CD8-positive, alpha-beta T cell (primary cell): ENCODE measurements at regions of chr11 and their contacts with region 1.

Region 1: DNA sequence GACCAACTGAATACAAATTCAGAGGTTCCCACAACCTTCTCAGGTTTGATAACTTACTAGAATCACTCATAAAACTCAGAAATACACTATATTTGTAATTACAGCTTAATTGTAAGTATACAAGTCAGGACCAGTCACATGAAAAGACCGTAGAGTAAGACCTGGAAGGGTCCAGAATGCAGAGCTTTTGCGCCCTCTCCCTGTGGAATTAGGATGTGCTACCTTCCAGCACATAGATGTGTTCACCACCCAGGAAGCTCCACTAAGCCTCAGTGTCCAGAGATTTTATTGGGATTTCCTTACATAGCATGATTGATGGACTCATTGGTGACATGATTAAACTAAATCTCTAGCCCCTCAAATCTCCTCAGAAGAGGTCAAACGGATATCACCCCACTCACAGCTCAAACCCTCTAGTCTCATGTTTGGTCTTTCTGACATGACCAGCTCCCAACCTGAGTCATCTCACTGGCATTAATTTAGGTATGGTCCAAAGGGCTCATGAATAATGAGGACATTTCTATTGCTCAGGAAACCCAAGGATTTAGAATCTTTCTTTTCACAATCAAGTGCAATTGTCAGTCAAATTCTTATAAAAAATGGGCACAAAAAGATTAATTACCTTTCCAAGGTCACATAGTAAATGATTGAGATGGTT is 77.2 kb upstream of the UBASH3B start:
- DNase-seq: no peak
- ATAC-seq: no peak
- H3K4me3 ChIP-seq: no peak overlapping the region
- H3K4me3 Mint-ChIP-seq: no peak overlapping the region
- H3K27ac ChIP-seq: no peak overlapping the region
- H3K27ac Mint-ChIP-seq: no peak overlapping the region
- H3K4me1 ChIP-seq: peaks cover 4% of the 10 kb centered on the region
- H3K4me1 Mint-ChIP-seq: peaks cover 7% of the 10 kb centered on the region
- H3K27me3 ChIP-seq: no peaks in the 10 kb centered on the region
- H3K27me3 Mint-ChIP-seq: no peaks in the 10 kb centered on the region
- CTCF ChIP-seq: no peak

Region 2: GRCh38 chr11:122538060-122538459 is 40.2 kb before region 1 on chr11:
- CTCF ChIA-PET with region 1: no interaction called
- POLR2A ChIA-PET with region 1: no interaction called
- intact Hi-C with region 1: no loop called
- DNase-seq: no peak
- ATAC-seq: no peak
- H3K4me3 ChIP-seq: no peak overlapping the region
- H3K4me3 Mint-ChIP-seq: no peak overlapping the region
- H3K27ac ChIP-seq: no peak overlapping the region
- H3K27ac Mint-ChIP-seq: no peak overlapping the region
- H3K4me1 ChIP-seq: no peaks in the 10 kb centered on the region
- H3K4me1 Mint-ChIP-seq: no peaks in the 10 kb centered on the region
- H3K27me3 ChIP-seq: no peaks in the 10 kb centered on the region
- H3K27me3 Mint-ChIP-seq: peaks cover 4% of the 10 kb centered on the region
- CTCF ChIP-seq: no peak

Region 3: DNA sequence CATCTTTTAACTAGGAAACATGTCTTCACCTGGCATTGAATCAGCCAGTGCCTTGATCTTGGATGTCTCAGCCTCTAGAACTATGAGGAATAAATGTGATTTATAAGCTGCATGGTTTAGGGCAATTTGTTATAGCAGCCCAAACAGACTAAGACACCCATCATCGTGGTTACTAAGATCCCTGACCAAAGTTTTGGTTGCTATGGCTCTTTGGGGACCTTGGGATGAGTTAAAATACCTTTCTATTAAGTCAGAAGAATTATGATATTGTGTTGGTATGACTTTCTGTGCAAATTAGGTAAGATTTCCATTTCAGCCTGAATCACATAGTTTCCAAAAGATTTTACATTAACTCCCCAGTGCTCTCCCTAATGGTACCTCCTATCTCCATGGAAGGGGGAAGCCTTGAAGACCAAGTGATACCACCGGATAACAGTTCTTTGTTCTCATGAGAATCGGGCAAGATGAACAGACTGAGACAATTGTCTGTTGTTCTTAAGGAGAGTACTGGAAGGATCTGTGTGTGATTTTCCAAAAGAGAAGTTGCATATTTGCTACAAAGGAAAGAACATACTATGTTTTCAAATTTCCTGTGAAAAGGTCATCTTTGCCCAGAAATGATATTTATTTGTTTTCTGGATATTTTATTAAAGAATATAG is 16.8 kb after region 1 on chr11:
- CTCF ChIA-PET with region 1: interaction called, 13 read pairs
- POLR2A ChIA-PET with region 1: no interaction called
- intact Hi-C with region 1: no loop called
- DNase-seq: no peak
- ATAC-seq: no peak
- H3K4me3 ChIP-seq: no peak overlapping the region
- H3K4me3 Mint-ChIP-seq: no peak overlapping the region
- H3K27ac ChIP-seq: no peak overlapping the region
- H3K27ac Mint-ChIP-seq: no peak overlapping the region
- H3K4me1 ChIP-seq: no peaks in the 10 kb centered on the region
- H3K4me1 Mint-ChIP-seq: no peaks in the 10 kb centered on the region
- H3K27me3 ChIP-seq: peaks cover 3% of the 10 kb centered on the region in 2 experiments
- H3K27me3 Mint-ChIP-seq: peaks cover 18% of the 10 kb centered on the region
- CTCF ChIP-seq: no peak

Region 4: DNA sequence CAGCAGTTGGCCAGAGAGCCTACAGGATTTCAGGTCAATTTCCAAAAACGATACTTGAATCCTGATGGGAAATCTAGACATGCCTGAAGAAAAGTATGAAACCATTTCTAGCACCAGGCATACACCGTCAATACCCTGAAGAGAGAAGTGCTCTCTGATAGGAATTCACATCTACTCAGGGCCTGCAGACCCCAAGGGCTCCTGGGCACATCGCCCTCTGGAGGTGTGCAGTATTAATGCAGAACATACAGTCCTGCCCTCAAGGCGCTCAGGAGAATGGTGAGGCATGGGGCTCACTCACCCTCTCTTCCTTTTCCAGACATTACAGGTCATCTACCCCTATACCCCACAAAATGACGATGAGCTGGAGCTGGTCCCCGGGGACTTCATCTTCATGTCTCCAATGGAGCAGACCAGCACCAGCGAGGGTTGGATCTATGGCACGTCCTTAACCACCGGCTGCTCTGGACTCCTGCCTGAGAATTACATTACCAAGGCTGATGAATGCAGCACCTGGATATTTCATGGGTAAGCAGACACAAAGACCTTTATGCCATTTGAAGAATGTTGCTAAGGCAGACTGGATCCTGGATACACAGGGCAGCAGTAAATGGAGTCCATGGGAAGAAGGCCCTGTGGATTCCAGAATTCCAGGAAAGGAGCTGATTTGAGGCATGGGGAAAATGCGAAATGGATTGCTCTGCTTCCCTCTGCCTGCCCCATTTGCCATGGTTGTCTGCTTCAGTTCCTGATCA is 210.7 kb after region 1 on chr11:
- CTCF ChIA-PET with region 1: interaction called, 79 read pairs
- POLR2A ChIA-PET with region 1: no interaction called
- intact Hi-C with region 1: no loop called
- DNase-seq: no peak
- ATAC-seq: no peak
- H3K4me3 ChIP-seq: no peak overlapping the region
- H3K4me3 Mint-ChIP-seq: no peak overlapping the region
- H3K27ac ChIP-seq: no peak overlapping the region
- H3K27ac Mint-ChIP-seq: no peak overlapping the region
- H3K4me1 ChIP-seq: no peaks in the 10 kb centered on the region
- H3K4me1 Mint-ChIP-seq: no peaks in the 10 kb centered on the region
- H3K27me3 ChIP-seq: no peaks in the 10 kb centered on the region
- H3K27me3 Mint-ChIP-seq: no peaks in the 10 kb centered on the region
- CTCF ChIP-seq: no peak